Activated CD4-positive, alpha-beta memory T cell treated with anti-CD3 and anti-CD28 coated beads for 36 hours (primary cell): ENCODE measurements at regions of chr12 and their contacts with region 1.

Region 1: GRCh38 chr12:121793838-121794533 is 498 bp upstream of the RHOF start:
- DNase-seq: peak; percentile 98
- H3K4me3 Mint-ChIP-seq: peak overlapping the region; percentile 88
- H3K27ac Mint-ChIP-seq: peak overlapping the region; percentile 94
- H3K4me1 Mint-ChIP-seq: peaks cover 58% of the 10 kb centered on the region
- H3K27me3 Mint-ChIP-seq: no peaks in the 10 kb centered on the region

Region 2: DNA sequence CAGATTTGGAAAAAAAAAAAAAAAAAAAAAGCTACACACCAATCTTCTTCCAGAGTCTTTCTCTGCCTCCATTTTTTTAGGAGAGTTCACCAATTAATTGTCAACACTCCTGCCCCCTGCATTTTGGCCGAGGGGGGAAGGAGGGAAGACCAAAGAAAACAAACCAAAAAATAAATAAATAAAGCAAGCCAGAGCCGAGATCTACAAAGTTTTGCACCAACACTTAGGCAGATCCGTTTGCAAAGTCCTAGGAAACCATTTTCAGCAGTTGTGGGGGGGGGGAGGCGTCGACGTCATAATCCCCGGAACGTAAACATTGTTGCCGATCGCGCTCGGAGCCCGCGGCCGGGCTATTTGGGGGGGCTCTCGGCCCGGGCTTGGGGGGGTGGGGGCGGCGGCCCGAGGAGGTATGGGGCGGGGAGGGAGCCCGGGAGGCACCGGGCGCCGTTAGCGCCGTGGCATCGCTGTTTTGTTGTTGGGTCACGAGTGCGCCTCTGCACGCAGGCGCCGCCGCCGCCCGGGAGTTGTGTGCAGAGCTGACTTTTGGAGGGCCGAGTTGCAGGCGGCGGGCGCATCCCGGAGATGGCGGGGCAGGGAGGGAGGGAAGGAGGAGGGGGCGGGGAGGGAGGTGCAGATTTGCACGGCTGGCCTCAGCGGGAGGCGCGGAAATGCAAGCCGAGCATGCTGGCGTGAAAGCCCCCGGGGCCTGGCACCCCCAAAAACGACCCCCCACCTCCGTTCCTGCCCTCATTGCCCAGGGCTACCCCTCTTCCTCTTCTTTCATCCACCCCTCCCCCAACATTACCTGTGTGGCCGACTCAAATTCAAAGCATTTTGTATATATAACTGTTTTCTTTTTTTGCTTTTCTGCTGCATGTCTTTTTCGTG is 213.8 kb before region 1 on chr12:
- CTCF ChIA-PET with region 1: interaction called, 3 read pairs
- POLR2A ChIA-PET with region 1: no interaction called
- intact Hi-C with region 1: loop called (anchors 5 kb)
- DNase-seq: peak; percentile 85
- H3K4me3 Mint-ChIP-seq: peak overlapping the region; percentile 86
- H3K27ac Mint-ChIP-seq: peak overlapping the region; percentile 92
- H3K4me1 Mint-ChIP-seq: peaks cover 33% of the 10 kb centered on the region
- H3K27me3 Mint-ChIP-seq: no peaks in the 10 kb centered on the region

Region 3: GRCh38 chr12:121697098-121697698 is 96.8 kb before region 1 on chr12:
- CTCF ChIA-PET with region 1: interaction called, 59 read pairs
- POLR2A ChIA-PET with region 1: no interaction called
- intact Hi-C with region 1: loop called (anchors 1 kb)
- DNase-seq: no peak
- H3K4me3 Mint-ChIP-seq: no peak overlapping the region
- H3K27ac Mint-ChIP-seq: no peak overlapping the region
- H3K4me1 Mint-ChIP-seq: no peaks in the 10 kb centered on the region
- H3K27me3 Mint-ChIP-seq: no peaks in the 10 kb centered on the region

Region 4: DNA sequence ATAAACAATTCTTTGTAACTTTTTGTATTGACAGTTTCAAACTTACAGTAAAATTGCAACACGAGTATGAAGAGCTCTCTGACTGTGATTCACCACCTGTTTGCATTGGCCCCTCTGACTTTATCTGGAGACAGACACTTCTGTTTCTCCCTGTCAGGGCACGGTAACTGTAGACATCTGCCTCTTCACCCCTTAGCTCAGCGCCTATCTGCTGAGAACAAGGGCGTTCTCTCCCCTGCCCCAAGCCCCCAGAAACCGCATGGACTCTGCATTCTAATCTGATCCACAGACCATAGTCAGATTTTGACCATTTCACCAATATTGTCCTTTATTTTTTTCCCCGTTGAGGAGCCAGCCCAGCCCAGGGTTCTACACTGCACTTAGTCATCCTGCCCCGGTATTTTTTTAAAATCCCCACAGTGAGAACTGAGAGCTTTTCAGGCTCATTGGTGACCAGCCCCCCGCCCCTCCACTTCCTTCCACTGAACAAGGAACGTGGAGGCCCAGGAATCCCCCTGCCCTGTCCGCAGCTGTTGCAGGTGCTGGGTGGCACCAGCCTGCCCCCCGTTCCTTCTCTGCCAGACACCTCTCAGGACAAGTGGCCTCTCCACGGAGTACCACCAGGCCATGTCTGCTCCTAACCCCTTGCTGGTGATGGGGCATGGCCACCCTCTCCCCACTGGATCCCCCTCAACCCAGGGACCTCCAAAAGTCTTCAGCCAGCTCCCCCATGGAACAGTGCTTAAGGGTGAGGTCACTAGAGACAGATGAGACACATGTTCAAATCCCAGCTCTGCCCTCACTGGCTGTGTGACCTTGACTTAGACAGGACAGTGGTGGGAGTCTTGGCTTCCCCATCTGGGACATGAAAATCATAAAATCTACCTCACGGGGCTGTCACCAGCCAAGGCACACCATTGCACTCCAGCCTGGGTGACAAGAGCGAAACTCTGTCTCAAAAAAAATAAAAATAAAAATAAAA is 11.7 kb before region 1 on chr12:
- CTCF ChIA-PET with region 1: interaction called, 417 read pairs
- POLR2A ChIA-PET with region 1: interaction called, 127 read pairs
- intact Hi-C with region 1: loop called (anchors 1 kb)
- DNase-seq: peak; percentile 88
- H3K4me3 Mint-ChIP-seq: peak overlapping the region; percentile 68
- H3K27ac Mint-ChIP-seq: peak overlapping the region; percentile 96
- H3K4me1 Mint-ChIP-seq: peaks cover 70% of the 10 kb centered on the region
- H3K27me3 Mint-ChIP-seq: no peaks in the 10 kb centered on the region

Region 5: GRCh38 chr12:121872546-121873215 is 78.7 kb after region 1 on chr12:
- CTCF ChIA-PET with region 1: interaction called, 10 read pairs
- POLR2A ChIA-PET with region 1: no interaction called
- intact Hi-C with region 1: no loop called
- DNase-seq: peak; percentile 48
- H3K4me3 Mint-ChIP-seq: no peak overlapping the region
- H3K27ac Mint-ChIP-seq: peak overlapping the region; percentile 46
- H3K4me1 Mint-ChIP-seq: peaks cover 4% of the 10 kb centered on the region
- H3K27me3 Mint-ChIP-seq: no peaks in the 10 kb centered on the region

Region 6: GRCh38 chr12:121917979-121918678 is 124.1 kb after region 1 on chr12 and contains the start of gene CFAP251:
- CTCF ChIA-PET with region 1: interaction called, 23 read pairs
- POLR2A ChIA-PET with region 1: no interaction called
- intact Hi-C with region 1: no loop called
- DNase-seq: peak; percentile 98
- H3K4me3 Mint-ChIP-seq: peak within 1 kb of the TSS; percentile 77
- H3K27ac Mint-ChIP-seq: peak within 1 kb of the TSS; percentile 84
- H3K4me1 Mint-ChIP-seq: peaks cover 14% of the 10 kb centered on the region
- H3K27me3 Mint-ChIP-seq: no peaks in the 10 kb centered on the region
- total RNA-seq, gene CFAP251: 1.3 to 1.6 TPM